HEK293T (cell line): ENCODE measurements at regions of chr17 and their contacts with region 1.

Region 1: GRCh38 chr17:73429440-73430164 is 117.8 kb upstream of the CDC42EP4 start:
- DNase-seq: peak; percentile 91

Region 2: GRCh38 chr17:73710095-73710592 is 280.5 kb after region 1 on chr17:
- CTCF ChIA-PET with region 1: interaction called, 20 read pairs
- POLR2A ChIA-PET with region 1: no interaction called
- DNase-seq: peak; percentile 83